K562 (cell line): ENCODE measurements at regions of chr14 and their contacts with region 1.

Region 1: DNA sequence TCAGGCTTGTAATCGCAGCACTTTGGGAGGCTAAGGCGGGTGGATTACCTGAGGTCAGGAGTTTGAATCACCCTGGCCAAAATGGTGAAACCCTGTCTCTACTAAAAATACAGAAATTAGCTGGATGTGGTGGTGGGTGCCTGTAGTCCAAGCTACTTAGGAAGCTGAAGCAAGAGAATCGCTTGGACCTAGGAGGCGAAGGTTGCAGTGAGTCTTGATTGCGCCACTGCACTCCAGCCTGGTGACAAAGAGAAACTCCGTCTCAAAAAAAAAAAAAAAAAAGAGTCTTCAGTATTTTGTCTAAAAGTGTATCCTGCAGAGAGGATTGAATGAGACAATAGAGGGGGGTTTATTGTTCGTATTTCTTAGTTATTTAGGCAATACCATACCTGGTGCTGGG is 25.3 kb downstream of the FOXA1 start:
- DNase-seq: no peak
- ATAC-seq: no peak
- H3K4me3 ChIP-seq: no peak overlapping the region
- H3K27ac ChIP-seq: no peak overlapping the region
- H3K4me1 ChIP-seq: no peaks in the 10 kb centered on the region
- H3K27me3 ChIP-seq: no peaks in the 10 kb centered on the region
- CTCF ChIP-seq: no peak
- EP300 ChIP-seq: no peak
- POLR2A ChIP-seq: no peak
- RAD21 ChIP-seq: no peak

Region 2: GRCh38 chr14:37246427-37246914 is 323.3 kb before region 1 on chr14:
- CTCF ChIA-PET with region 1: interaction called, 11 read pairs
- POLR2A ChIA-PET with region 1: no interaction called
- in situ Hi-C with region 1: no loop called
- intact Hi-C with region 1: no loop called
- DNase-seq: peak; percentile 16 to 54 (median 24)
- ATAC-seq: 0 out of 3 replicates have a peak, but pooled peaks have one; percentile 39
- H3K4me3 ChIP-seq: no peak overlapping the region
- H3K27ac ChIP-seq: no peak overlapping the region
- H3K4me1 ChIP-seq: no peaks in the 10 kb centered on the region
- H3K27me3 ChIP-seq: no peaks in the 10 kb centered on the region
- CTCF ChIP-seq: peak in 2 of 3 experiments; percentile 53 to 71; a peak in 4 of 6 replicates
- EP300 ChIP-seq: no peak
- POLR2A ChIP-seq: no peak
- RAD21 ChIP-seq: peak; percentile 67 to 73